GM12878 (cell line): ENCODE measurements at regions of chr1 and their contacts with region 1.

Region 1: DNA sequence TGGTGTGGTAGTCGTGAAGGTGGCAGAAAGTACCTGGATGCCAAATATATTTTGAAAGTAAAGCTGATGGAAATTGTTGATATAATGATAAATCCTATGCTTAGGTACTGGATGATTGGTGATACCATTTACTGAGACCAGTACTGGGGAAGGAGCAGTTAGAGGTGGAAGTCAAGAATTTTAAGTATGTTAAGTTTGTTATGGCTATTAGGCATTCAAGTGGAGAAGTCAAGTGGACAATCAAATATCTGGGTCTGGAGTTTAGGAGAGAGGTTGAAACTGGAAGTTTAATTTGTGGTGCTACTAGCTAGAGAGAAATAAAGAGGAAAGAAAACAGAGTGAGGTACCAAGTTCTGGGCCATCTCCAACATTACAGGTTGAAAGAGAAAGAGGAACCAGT is 89.1 kb downstream of the ATF6 start:
- DNase-seq: no peak
- ATAC-seq: no peak
- H3K4me3 ChIP-seq: no peak overlapping the region
- H3K27ac ChIP-seq: no peak overlapping the region
- H3K4me1 ChIP-seq: no peaks in the 10 kb centered on the region
- H3K27me3 ChIP-seq: no peaks in the 10 kb centered on the region
- CTCF ChIP-seq: no peak
- EP300 ChIP-seq: no peak
- POLR2A ChIP-seq: no peak
- RAD21 ChIP-seq: no peak

Region 2: GRCh38 chr1:161872506-161872905 is 17.2 kb after region 1 on chr1:
- CTCF ChIA-PET with region 1: interaction called, 3 read pairs
- POLR2A ChIA-PET with region 1: no interaction called
- RAD21 ChIA-PET with region 1: interaction called, 3 read pairs
- SMC1A ChIA-PET with region 1: interaction called, 10 read pairs
- in situ Hi-C with region 1: no loop called
- intact Hi-C with region 1: no loop called
- DNase-seq: no peak
- ATAC-seq: no peak
- H3K4me3 ChIP-seq: no peak overlapping the region
- H3K27ac ChIP-seq: no peak overlapping the region
- H3K4me1 ChIP-seq: no peaks in the 10 kb centered on the region
- H3K27me3 ChIP-seq: no peaks in the 10 kb centered on the region
- CTCF ChIP-seq: no peak
- EP300 ChIP-seq: no peak
- POLR2A ChIP-seq: no peak
- RAD21 ChIP-seq: no peak